Tibial artery (tissue), 4 donors: ENCODE measurements at regions of chr6 and their contacts with region 1.

Region 1: GRCh38 chr6:48200869-48201390 is 89.9 kb upstream of the PTCHD4 start:
- DNase-seq: no peak
- H3K4me3 ChIP-seq: no peak overlapping the region
- H3K27ac ChIP-seq: no peak overlapping the region
- H3K4me1 ChIP-seq: no peaks in the 10 kb centered on the region
- H3K27me3 ChIP-seq: no peaks in the 10 kb centered on the region
- CTCF ChIP-seq: no peak

Region 2: DNA sequence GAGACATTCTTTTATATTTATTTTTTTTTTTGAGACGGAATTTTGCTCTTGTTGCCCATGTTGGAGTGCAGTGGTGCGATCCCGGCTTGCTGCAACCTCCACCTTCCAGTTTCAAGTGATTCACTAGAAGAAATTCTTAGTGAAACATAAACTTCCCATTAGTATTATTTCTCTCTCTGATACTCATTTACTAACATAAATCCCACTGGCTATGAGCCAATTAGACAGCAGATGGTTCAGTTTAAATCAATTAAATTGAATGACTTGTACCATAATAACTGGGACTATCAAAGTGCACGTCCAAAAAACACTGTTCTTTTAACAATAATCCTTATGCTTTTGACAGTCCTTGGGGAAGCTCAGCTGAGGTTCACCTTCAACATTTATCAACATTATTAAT is 21.3 kb after region 1 on chr6:
- intact Hi-C with region 1: loop called (anchors 2 kb)
- DNase-seq: no peak
- H3K4me3 ChIP-seq: no peak overlapping the region
- H3K27ac ChIP-seq: no peak overlapping the region
- H3K4me1 ChIP-seq: no peaks in the 10 kb centered on the region
- H3K27me3 ChIP-seq: no peaks in the 10 kb centered on the region
- CTCF ChIP-seq: no peak